ENCODE measurements at regions of chrX and their contacts with region 1.

Region 1: DNA sequence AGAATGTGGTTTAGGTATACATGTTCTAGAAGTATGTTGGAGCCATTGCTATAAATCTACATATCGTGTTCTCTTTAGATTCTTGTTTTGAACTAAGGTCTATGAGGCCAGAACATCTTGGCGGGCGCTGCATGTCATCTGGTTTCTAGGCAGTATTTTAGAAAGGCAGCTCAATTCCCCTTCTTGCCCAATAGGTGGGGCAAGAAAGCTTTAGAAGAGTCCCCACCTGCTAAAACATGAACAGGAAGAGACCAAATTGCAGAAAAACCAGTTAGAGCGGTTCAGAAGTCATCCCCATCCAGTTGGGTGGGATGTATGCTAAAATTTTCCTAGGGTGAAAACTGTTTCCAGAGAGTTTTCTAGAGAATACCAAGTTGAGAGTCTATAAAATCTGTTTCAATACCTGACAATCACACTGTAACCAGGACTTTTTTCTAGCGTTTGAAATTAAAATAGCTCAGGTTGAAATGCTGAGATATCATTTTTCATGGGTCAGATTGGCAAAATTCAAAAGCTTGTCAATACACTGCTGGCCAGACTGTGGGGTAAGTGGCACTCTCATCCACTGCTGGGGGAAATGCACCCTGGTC is 17.5 kb upstream of the SH3KBP1 start:
- DNase-seq: peak; percentile 70
- H3K4me3 Mint-ChIP-seq: no peak overlapping the region
- H3K27ac Mint-ChIP-seq: no peak overlapping the region
- H3K4me1 Mint-ChIP-seq: peaks cover 14% of the 10 kb centered on the region
- H3K27me3 Mint-ChIP-seq: no peaks in the 10 kb centered on the region

Region 2: GRCh38 chrX:19758539-19758938 is 146.3 kb before region 1 on chrX:
- intact Hi-C with region 1: no loop called
- DNase-seq: no peak
- H3K4me3 Mint-ChIP-seq: no peak overlapping the region
- H3K27ac Mint-ChIP-seq: no peak overlapping the region
- H3K4me1 Mint-ChIP-seq: peaks cover 33% of the 10 kb centered on the region
- H3K27me3 Mint-ChIP-seq: no peaks in the 10 kb centered on the region

Region 3: GRCh38 chrX:19990556-19991349 is 85.9 kb after region 1 on chrX and contains the start of gene BCLAF3:
- intact Hi-C with region 1: loop called (anchors 1 kb)
- DNase-seq: peak; percentile 95
- H3K4me3 Mint-ChIP-seq: peak within 1 kb of the TSS; percentile 82
- H3K27ac Mint-ChIP-seq: peak within 1 kb of the TSS; percentile 73
- H3K4me1 Mint-ChIP-seq: peaks cover 8% of the 10 kb centered on the region
- H3K27me3 Mint-ChIP-seq: no peaks in the 10 kb centered on the region
- total RNA-seq, gene BCLAF3: 4.4 and 5.6 TPM in 2 replicates

Region 4: DNA sequence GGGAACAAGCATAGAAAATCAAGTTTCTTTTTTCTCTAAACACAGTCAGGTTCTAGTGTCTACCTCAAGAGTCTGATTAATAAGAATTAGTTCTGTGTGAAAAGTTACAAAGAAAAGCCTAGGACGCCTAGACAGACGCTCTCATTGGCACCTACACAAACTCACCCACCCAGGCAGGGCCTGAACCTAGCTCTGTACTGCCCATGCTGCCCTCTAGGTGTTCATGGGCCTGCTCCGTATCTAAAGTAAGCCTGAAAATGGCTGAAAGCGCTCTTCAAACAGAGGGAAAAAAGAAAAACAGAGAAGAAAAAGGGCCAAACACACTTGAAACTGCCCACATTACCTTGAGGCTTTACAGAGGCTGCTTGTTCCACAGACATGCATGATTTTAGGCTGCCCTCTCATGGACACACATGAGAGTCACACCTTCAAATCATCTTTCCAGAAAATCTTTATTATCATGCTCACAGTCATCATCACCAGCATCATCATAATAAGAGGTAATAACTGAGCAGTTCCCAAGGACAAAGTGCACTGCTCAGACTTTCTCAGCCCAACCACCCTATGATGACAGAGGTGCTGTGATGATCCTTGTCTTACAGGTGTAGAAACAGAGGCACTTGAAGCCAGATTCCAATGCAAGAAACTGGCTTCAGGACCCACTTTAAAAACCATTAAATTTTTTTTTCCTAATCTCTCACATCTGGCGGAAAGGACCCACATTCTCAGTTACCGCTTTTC is 162.3 kb after region 1 on chrX:
- intact Hi-C with region 1: loop called (anchors 2 kb)
- DNase-seq: peak; percentile 66
- H3K4me3 Mint-ChIP-seq: no peak overlapping the region
- H3K27ac Mint-ChIP-seq: no peak overlapping the region
- H3K4me1 Mint-ChIP-seq: no peaks in the 10 kb centered on the region
- H3K27me3 Mint-ChIP-seq: peaks cover 2% of the 10 kb centered on the region

Region 5: DNA sequence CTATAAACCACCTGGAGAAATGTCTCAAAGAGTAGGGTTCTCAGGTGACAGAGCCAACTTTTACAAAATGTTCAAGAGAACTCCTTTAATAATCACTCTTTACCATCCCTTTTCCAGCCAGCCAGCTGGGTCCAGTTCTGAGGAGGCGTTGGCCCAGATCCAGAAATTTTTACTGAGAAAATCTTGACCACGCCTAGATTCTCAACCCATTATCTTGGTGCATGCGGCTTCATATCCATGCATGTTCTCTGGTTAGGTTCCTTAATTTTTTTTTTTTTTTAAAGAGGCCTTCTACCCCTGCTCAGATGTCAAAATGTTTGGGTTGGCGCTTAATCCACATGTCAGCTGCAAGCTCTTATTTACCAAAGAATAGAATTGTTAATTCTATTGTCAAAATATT is 223.8 kb after region 1 on chrX:
- intact Hi-C with region 1: loop called (anchors 10 kb)
- DNase-seq: no peak
- H3K4me3 Mint-ChIP-seq: no peak overlapping the region
- H3K27ac Mint-ChIP-seq: no peak overlapping the region
- H3K4me1 Mint-ChIP-seq: peaks cover 2% of the 10 kb centered on the region
- H3K27me3 Mint-ChIP-seq: no peaks in the 10 kb centered on the region

Region 6: DNA sequence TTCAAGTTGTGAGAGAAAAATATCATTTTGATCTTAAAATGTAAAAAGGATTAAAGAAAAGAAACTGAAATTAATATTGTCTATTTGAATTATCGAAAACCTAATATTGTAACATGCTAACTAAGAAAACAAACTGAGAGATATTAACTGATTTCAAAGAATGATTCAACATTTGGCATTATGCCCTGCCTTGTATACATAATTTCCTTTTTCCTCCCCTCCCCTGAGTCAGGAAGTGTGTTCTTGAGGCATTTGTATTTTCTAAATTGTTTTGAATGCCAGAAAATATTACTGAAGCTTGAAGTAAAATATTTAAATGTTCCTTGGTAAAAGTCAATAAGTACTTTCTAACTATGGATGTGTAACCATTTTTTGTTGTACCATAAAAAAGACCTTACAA is 312.4 kb after region 1 on chrX:
- intact Hi-C with region 1: no loop called
- DNase-seq: no peak
- H3K4me3 Mint-ChIP-seq: no peak overlapping the region
- H3K27ac Mint-ChIP-seq: no peak overlapping the region
- H3K4me1 Mint-ChIP-seq: peaks cover 11% of the 10 kb centered on the region
- H3K27me3 Mint-ChIP-seq: no peaks in the 10 kb centered on the region

Measured in activated CD4-positive, alpha-beta T cell treated with anti-CD3 and anti-CD28 coated beads, Interleukin-2, amount 10 ng/mL, durations not matched to agents 24 days and 14 days (primary cell).